HCT116 (cell line): ENCODE measurements at regions of chr3 and their contacts with region 1.

Region 1: GRCh38 chr3:160941885-160942494 is 163.2 kb downstream of the B3GALNT1 start:
- DNase-seq: peak; percentile 58
- ATAC-seq: peak; percentile 80
- H3K4me3 ChIP-seq: no peak overlapping the region
- H3K27ac ChIP-seq: no peak overlapping the region
- H3K4me1 ChIP-seq: no peaks in the 10 kb centered on the region
- H3K27me3 ChIP-seq: no peaks in the 10 kb centered on the region
- CTCF ChIP-seq: peak; percentile 74 to 79 (median 75)
- POLR2A ChIP-seq: no peak
- RAD21 ChIP-seq: peak; percentile 85

Region 2: DNA sequence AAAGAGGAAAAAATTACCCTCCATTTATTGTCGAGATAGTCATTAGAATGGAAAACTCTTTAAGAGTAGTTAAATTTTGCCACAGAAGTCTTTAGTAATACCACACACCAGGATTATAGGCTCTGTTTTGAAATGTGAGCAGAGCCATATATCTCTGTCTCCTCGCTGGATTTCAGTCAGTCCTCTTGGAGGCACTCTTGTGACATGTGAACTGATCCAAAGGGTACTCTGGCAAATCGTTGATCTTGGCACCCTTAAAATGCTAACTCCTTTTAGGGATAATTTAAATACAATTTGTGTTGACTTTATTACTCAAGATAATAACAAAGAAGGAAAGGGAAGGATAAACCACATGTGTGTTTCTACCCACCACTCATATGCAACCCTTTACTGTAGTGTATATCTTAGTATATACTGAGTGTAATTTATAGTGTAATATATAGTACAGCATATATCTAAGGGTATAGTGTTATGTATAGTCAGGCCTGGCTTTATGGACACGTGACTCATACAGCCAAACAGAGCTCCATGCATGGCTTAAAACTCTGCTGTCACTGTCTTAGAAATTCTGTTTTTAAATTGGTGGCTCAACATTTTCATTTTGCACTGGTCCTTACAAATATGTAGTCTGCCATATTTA is 364.3 kb before region 1 on chr3:
- CTCF ChIA-PET with region 1: interaction called, 3 read pairs
- POLR2A ChIA-PET with region 1: no interaction called
- RAD21 ChIA-PET with region 1: no interaction called
- intact Hi-C with region 1: loop called (anchors 1 kb)
- DNase-seq: peak; percentile 23
- ATAC-seq: peak; percentile 91
- H3K4me3 ChIP-seq: no peak overlapping the region
- H3K27ac ChIP-seq: no peak overlapping the region
- H3K4me1 ChIP-seq: no peaks in the 10 kb centered on the region
- H3K27me3 ChIP-seq: no peaks in the 10 kb centered on the region
- CTCF ChIP-seq: peak; percentile 44 to 61 (median 60); a peak in 5 of 6 replicates
- POLR2A ChIP-seq: no peak
- RAD21 ChIP-seq: peak; percentile 79

Region 3: GRCh38 chr3:160686955-160687535 is 254.9 kb before region 1 on chr3:
- CTCF ChIA-PET with region 1: interaction called, 7 read pairs
- POLR2A ChIA-PET with region 1: no interaction called
- RAD21 ChIA-PET with region 1: no interaction called
- intact Hi-C with region 1: loop called (anchors 1 kb)
- DNase-seq: no peak
- ATAC-seq: peak; percentile 68; the same call in 1 of the 2 replicates
- H3K4me3 ChIP-seq: no peak overlapping the region
- H3K27ac ChIP-seq: no peak overlapping the region
- H3K4me1 ChIP-seq: peaks cover 0 to 2% of the 10 kb centered on the region in 2 experiments; a peak in 1 of 4 replicates
- H3K27me3 ChIP-seq: no peaks in the 10 kb centered on the region
- CTCF ChIP-seq: peak; percentile 12 to 70 (median 36); a peak in 3 of 6 replicates
- POLR2A ChIP-seq: no peak
- RAD21 ChIP-seq: peak; percentile 57

Region 4: GRCh38 chr3:160707187-160707794 is 234.7 kb before region 1 on chr3:
- CTCF ChIA-PET with region 1: interaction called, 9 read pairs
- POLR2A ChIA-PET with region 1: no interaction called
- RAD21 ChIA-PET with region 1: no interaction called
- intact Hi-C with region 1: loop called (anchors 1 kb)
- DNase-seq: peak; percentile 37
- ATAC-seq: peak; percentile 92
- H3K4me3 ChIP-seq: no peak overlapping the region
- H3K27ac ChIP-seq: no peak overlapping the region
- H3K4me1 ChIP-seq: no peaks in the 10 kb centered on the region
- H3K27me3 ChIP-seq: no peaks in the 10 kb centered on the region
- CTCF ChIP-seq: peak; percentile 46 to 74 (median 59); a peak in 5 of 6 replicates
- POLR2A ChIP-seq: no peak
- RAD21 ChIP-seq: peak; percentile 87

Region 5: GRCh38 chr3:160755776-160756374 is 186.1 kb before region 1 on chr3 and contains the start of gene PPM1L:
- CTCF ChIA-PET with region 1: no interaction called
- POLR2A ChIA-PET with region 1: no interaction called
- RAD21 ChIA-PET with region 1: no interaction called
- intact Hi-C with region 1: no loop called
- DNase-seq: peak; percentile 7
- ATAC-seq: peak; percentile 50
- H3K4me3 ChIP-seq: peak within 1 kb of the TSS; percentile 70 to 95
- H3K27ac ChIP-seq: peak within 1 kb of the TSS; percentile 80
- H3K4me1 ChIP-seq: peaks cover 4 to 15% of the 10 kb centered on the region in 2 experiments; a peak in 3 of 4 replicates
- H3K27me3 ChIP-seq: no peaks in the 10 kb centered on the region
- CTCF ChIP-seq: no peak
- POLR2A ChIP-seq: no peak
- RAD21 ChIP-seq: no peak
- total RNA-seq, gene PPM1L: 13.2 TPM

Region 6: GRCh38 chr3:160968761-160969160 is 26.8 kb after region 1 on chr3:
- CTCF ChIA-PET with region 1: no interaction called
- POLR2A ChIA-PET with region 1: no interaction called
- RAD21 ChIA-PET with region 1: no interaction called
- intact Hi-C with region 1: no loop called
- DNase-seq: no peak
- ATAC-seq: no peak
- H3K4me3 ChIP-seq: no peak overlapping the region
- H3K27ac ChIP-seq: no peak overlapping the region
- H3K4me1 ChIP-seq: no peaks in the 10 kb centered on the region
- H3K27me3 ChIP-seq: no peaks in the 10 kb centered on the region
- CTCF ChIP-seq: no peak
- POLR2A ChIP-seq: no peak
- RAD21 ChIP-seq: no peak